Activated CD8-positive, alpha-beta T cell treated with anti-CD3 and anti-CD28 coated beads, Interleukin-2, amount 10 ng/mL, durations not matched to agents 7 days and 5 days (primary cell): ENCODE measurements at regions of chr5 and their contacts with region 1.

Region 1: GRCh38 chr5:173057062-173057924 is 1.1 kb downstream of the CREBRF start:
- DNase-seq: peak; percentile 100
- ATAC-seq: peak; percentile 88
- H3K4me3 Mint-ChIP-seq: peak overlapping the region; percentile 93
- H3K27ac Mint-ChIP-seq: peak overlapping the region; percentile 95
- H3K4me1 Mint-ChIP-seq: peaks cover 42% of the 10 kb centered on the region
- H3K27me3 Mint-ChIP-seq: no peaks in the 10 kb centered on the region

Region 2: GRCh38 chr5:173108914-173109313 is 51.6 kb after region 1 on chr5:
- CTCF ChIA-PET with region 1: interaction called, 4 read pairs
- POLR2A ChIA-PET with region 1: interaction called, 10 read pairs
- DNase-seq: no peak
- ATAC-seq: no peak
- H3K4me3 Mint-ChIP-seq: no peak overlapping the region
- H3K27ac Mint-ChIP-seq: peak overlapping the region; percentile 15
- H3K4me1 Mint-ChIP-seq: peaks cover 15% of the 10 kb centered on the region
- H3K27me3 Mint-ChIP-seq: no peaks in the 10 kb centered on the region

Region 3: GRCh38 chr5:173144200-173145176 is 87.2 kb after region 1 on chr5 and contains the start of gene BNIP1:
- CTCF ChIA-PET with region 1: interaction called, 12 read pairs
- POLR2A ChIA-PET with region 1: interaction called, 12 read pairs
- DNase-seq: peak; percentile 97
- ATAC-seq: peak; percentile 94
- H3K4me3 Mint-ChIP-seq: peak within 1 kb of the TSS; percentile 98
- H3K27ac Mint-ChIP-seq: peak within 1 kb of the TSS; percentile 99
- H3K4me1 Mint-ChIP-seq: peaks cover 16% of the 10 kb centered on the region
- H3K27me3 Mint-ChIP-seq: no peaks in the 10 kb centered on the region
- total RNA-seq, gene BNIP1: 14.3 to 14.5 TPM